Dorsolateral prefrontal cortex (tissue), 120 donors: ENCODE measurements at regions of chr1 and their contacts with region 1.

Region 1: GRCh38 chr1:48817505-48818114 is 40.9 kb upstream of the BEND5 start:
- DNase-seq: peak; percentile 11 to 73 (median 58)
- H3K4me3 ChIP-seq: no peak overlapping the region
- H3K27ac ChIP-seq: no peak overlapping the region
- H3K27me3 ChIP-seq: no peaks in the 10 kb centered on the region
- CTCF ChIP-seq: peak; percentile 24 to 89 (median 73)

Region 2: DNA sequence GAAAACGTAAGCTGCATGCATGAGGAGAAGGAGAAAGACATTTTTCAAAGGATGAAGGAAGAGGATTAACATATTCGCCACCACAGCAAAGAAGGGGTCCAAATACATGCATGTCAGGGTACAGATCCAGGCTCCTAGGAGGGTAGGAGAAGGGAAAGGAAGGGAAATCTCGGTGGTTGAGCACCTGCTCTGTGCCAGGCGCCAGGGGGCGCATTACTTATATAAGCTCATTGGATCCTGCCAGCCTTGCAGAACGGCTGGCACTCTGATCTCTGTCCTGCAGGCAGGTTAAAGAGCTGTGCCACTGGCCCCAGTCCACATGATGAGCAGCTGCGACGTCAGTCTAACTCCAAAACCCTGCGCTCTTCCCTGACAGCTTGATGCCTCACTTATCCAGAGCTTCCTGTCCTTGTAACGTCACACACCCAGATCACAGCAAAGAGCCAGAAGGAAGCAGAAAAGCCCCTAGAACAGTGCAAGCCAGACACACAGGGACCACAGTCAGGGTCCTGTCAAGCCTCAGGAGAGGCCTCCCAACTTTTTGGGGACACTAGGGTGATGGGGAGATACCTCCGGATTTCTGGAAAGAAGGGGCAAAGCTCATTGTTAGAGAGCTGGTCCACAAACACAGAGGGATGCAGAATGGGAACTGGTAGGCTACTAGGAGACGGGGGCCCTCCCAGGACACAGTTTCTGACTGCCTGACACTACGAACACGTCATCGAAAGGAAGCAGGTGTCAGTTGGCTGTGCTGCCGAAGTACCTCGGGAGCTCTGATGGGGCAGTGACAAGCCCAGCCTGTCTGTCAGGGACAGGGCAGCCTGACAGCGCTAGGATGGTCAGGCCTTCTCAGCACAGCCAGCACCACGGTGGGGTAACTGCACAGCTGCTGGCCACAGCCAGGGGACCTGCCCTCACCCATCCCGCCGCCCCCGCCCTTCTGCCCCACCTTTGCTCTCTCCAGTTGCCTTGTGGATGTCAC is 140.0 kb before region 1 on chr1:
- intact Hi-C with region 1: loop called in 1 of 2 experiments (anchors 2 kb)
- DNase-seq: peak; percentile 34 to 78 (median 70)
- H3K4me3 ChIP-seq: peak overlapping the region in 1 of 59 donors; percentile 14
- H3K27ac ChIP-seq: no peak overlapping the region
- H3K27me3 ChIP-seq: no peaks in the 10 kb centered on the region
- CTCF ChIP-seq: peak; percentile 59 to 87 (median 74)

Region 3: GRCh38 chr1:48697066-48697707 is 120.4 kb before region 1 on chr1:
- intact Hi-C with region 1: loop called in 1 of 2 experiments (anchors 5 kb)
- DNase-seq: peak in 8 of 10 donors; percentile 33 to 84 (median 74)
- H3K4me3 ChIP-seq: no peak overlapping the region
- H3K27ac ChIP-seq: no peak overlapping the region
- H3K27me3 ChIP-seq: no peaks in the 10 kb centered on the region
- CTCF ChIP-seq: peak; percentile 82 to 98 (median 92)